Posterior vena cava (tissue), 2 donors: ENCODE measurements at regions of chr12 and their contacts with region 1.

Region 1: GRCh38 chr12:53160000-53160399 is 20.5 kb upstream of the ZNF740 start:
- DNase-seq: no peak

Region 2: DNA sequence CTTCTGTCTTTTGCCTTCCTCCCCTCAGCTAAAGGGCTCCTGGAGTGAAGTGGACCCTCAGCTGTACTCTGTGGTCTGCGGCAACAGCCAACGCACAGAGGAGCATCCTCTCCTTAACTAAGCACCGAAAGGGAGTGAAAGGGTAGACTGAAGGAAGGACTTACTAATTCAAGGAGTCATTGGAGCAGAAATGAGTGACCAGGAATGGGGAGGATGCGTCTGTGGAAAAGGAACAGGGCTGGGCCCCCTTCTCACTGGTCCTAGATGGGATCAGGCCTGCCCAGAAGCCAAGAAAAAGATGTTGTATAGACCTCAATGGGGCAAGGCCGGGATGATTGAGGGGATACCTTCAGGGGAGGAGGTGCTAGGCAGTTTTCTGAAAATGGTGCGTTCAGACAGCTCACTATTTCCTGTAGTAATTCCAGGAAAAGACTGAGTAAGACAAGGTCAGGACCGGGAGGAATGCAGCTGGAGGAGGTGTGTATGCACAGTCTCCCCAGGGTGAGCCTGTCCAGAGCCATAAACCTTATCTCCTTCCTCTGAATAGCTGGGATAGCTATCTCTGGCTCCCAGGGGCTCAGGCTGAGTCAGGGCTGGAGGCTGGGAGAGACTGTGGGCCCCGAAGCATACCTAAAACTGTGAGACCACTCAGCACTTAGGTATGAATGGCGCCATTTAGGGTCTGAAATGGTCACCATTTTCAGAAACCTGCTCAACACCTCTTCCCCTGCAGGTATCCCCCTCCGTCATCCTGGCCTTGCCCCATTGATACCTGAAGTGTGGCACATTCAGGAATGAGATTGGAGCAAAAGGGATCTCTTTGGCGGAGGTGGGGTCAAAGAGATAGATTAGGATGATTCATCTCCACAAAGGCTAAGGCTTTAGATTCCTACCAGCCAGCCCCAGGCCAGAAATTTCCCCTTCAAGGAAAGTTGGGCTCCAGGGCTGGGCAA is 235.0 kb before region 1 on chr12:
- intact Hi-C with region 1: no loop called
- DNase-seq: no peak

Region 3: DNA sequence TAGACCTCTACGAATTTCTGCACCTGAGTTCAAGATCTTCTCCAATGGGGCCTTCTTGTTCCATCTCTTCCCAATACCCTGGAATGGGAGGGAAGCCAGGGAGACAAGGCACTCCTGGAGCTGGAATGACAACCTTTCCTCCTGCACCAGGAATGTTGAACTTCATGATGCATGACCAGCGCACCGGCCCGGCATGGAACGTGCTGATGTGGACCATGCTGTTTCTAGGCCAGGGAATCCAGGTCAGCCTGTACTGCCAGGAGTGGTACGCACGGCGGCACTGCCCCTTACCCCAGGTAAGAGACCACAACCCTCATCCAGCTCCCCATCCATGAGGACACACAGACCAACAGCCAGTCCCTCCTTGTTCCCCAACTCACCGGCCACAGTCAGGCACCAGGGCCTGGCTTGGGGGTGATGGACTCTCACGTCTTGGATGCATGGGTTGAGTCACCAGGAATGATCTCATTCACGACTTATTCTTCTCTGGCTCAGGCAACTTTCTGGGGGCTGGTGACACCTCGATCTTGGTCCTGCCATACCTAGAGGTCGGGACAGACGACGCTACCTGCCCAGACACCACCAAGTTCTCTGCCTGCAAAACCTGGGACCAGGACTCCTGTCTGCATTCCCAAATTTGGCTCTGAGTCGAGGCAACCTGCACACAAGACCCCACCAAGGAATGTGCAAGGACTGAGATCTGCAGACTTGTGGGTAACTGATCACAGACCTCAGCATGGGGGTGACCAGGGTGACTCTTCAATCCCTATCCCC is 36.2 kb before region 1 on chr12:
- intact Hi-C with region 1: no loop called
- DNase-seq: no peak

Region 4: DNA sequence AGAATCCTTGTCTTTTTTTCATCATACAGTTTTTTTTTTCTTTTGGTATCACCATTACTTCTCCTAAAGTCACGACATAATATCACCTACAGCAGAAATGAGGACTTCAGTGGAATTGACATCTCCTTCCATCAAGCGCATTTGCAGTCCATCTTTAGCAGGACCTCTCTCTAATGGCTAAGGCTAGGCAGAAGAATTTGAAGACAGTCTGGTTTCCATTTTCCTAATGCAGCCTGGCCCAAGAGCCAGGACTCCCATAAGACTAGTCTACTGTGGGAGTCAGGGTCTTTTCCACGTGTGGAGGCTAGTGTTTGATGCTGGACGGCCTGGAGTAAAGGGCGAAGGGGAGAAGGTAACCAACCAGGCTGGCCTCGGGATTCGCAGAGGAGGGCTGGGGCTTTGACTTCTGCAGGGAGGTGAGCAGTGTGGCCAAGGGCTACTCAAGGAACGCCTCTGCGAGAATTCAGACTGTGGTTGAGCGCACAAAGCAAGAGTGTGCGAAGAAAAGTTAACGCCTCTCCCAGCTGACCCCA is 19.8 kb after region 1 on chr12:
- intact Hi-C with region 1: loop called in 1 of 2 experiments (anchors 2 kb)
- DNase-seq: no peak

Region 5: DNA sequence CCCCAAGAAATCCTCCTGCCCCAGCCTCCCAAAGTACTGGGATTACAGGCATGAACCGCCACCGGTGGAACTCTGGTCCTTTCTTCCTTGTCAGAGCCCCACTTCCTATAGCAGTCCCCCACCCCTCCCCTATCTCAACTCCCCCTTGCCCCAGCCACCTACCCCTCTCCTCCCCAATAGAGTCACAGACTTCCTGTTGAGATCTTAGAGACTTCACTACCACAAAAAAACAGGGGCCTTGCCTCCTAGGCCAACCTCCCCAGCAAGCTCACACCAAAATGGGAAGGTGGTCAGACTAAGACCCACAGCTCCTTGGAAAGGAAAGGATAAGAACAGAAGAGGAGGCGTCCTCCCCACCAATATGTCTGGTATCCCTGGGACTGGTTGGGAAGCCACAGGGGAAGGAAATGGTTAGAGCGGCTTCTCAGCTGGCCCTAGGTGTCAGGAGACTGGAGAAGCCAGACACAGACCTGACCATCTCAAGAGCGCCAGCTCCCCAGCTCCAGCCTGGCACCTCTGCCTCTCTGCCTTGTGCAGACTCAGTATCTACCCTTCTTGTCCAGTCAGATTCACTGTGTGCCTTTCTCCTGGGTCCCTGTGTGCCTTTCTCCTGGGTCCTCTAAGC is 38.6 kb after region 1 on chr12:
- intact Hi-C with region 1: loop called in 1 of 2 experiments (anchors 5 kb)
- DNase-seq: no peak